ENCODE measurements at regions of chr17 and their contacts with region 1.

Region 1: GRCh38 chr17:46193626-46194392 is 580 bp upstream of the KANSL1 start:
- DNase-seq: peak; percentile 94
- H3K4me3 Mint-ChIP-seq: peak overlapping the region; percentile 83
- H3K27ac Mint-ChIP-seq: peak overlapping the region; percentile 94
- H3K4me1 Mint-ChIP-seq: peaks cover 58% of the 10 kb centered on the region
- H3K27me3 Mint-ChIP-seq: no peaks in the 10 kb centered on the region

Region 2: DNA sequence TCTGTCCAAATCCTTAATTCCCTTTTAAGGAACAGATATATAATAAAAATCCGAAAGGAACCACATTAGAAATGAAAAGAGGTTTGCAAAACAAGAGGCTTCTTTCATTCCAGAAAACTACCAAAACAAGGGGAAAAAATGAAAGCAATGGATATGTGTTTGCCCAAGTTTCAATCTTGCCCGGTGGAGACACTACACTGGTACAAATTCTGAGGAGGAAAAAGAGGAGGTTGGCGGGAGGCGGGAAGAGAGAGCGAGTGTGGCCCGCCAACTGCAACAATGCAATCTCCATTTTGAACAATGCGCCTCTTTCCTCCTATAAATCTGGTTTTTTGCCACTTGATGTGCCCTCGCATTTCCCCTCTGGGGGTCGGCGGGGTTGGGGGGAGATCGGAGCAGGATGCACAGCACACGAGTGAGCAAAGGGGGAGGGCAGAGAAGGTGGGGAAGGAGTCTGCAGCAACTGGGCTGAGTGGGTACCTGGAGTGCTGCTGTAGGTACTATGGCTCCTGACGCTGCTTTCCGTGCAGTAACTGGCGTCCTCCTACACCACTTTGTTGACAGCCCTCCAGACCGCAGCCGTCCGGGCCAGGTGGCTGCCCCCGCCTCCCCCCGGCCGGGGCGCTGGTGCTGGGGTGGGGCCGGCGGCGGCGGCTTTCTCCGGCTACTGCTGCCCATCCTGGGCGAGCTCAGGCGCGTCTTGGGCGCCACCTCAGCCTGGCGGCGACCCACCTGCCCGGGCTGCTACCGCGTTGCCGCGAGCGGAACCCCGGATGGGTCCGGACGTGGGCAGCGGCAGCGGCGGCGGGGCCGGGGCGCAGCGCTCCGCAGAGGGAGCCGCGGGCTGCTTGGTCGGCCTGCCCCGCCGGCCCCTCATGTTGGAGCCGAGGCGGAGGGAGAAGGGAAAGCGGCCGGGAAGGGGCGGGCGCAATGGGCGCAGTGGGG is 609.4 kb before region 1 on chr17:
- intact Hi-C with region 1: loop called (anchors 1 kb)
- DNase-seq: peak; percentile 80
- H3K4me3 Mint-ChIP-seq: peak overlapping the region; percentile 85
- H3K27ac Mint-ChIP-seq: peak overlapping the region; percentile 91
- H3K4me1 Mint-ChIP-seq: peaks cover 39% of the 10 kb centered on the region
- H3K27me3 Mint-ChIP-seq: no peaks in the 10 kb centered on the region

Region 3: DNA sequence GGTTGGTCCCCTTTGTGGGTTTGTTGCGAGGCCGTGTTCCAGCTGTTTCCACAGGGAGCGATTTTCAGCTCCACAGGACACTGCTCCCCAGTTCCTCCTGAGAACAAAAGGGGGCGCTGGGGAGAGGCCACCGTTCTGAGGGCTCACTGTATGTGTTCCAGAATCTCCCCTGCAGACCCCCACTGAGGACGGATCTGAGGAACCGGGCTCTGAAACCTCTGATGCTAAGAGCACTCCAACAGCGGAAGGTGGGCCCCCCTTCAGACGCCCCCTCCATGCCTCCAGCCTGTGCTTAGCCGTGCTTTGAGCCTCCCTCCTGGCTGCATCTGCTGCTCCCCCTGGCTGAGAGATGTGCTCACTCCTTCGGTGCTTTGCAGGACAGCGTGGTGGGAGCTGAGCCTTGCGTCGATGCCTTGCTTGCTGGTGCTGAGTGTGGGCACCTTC is 222.1 kb before region 1 on chr17:
- intact Hi-C with region 1: no loop called
- DNase-seq: no peak
- H3K4me3 Mint-ChIP-seq: no peak overlapping the region
- H3K27ac Mint-ChIP-seq: no peak overlapping the region
- H3K4me1 Mint-ChIP-seq: peaks cover 2% of the 10 kb centered on the region
- H3K27me3 Mint-ChIP-seq: peaks cover 20% of the 10 kb centered on the region

Region 4: GRCh38 chr17:46097497-46097896 is 96.3 kb before region 1 on chr17:
- intact Hi-C with region 1: loop called (anchors 1 kb)
- DNase-seq: no peak
- H3K4me3 Mint-ChIP-seq: no peak overlapping the region
- H3K27ac Mint-ChIP-seq: no peak overlapping the region
- H3K4me1 Mint-ChIP-seq: peaks cover 36% of the 10 kb centered on the region
- H3K27me3 Mint-ChIP-seq: no peaks in the 10 kb centered on the region

Region 5: GRCh38 chr17:46154151-46154816 is 39.5 kb before region 1 on chr17:
- intact Hi-C with region 1: loop called (anchors 1 kb)
- DNase-seq: no peak
- H3K4me3 Mint-ChIP-seq: peak overlapping the region; percentile 26
- H3K27ac Mint-ChIP-seq: peak overlapping the region; percentile 76
- H3K4me1 Mint-ChIP-seq: peaks cover 63% of the 10 kb centered on the region
- H3K27me3 Mint-ChIP-seq: no peaks in the 10 kb centered on the region

Measured in activated T-helper 2 cell treated with anti-CD3 and anti-CD28 coated beads, Interferon-gamma antibody, Interleukin-2, Interleukin-4, amounts not matched to agents 10 μg/mL and 5 μg/mL and 100 μg/mL, durations not matched to agents 14 hours and 24 hours and 36 hours (primary cell).